AG04450 (cell line): ENCODE measurements at regions of chr17 and their contacts with region 1.

Region 1: DNA sequence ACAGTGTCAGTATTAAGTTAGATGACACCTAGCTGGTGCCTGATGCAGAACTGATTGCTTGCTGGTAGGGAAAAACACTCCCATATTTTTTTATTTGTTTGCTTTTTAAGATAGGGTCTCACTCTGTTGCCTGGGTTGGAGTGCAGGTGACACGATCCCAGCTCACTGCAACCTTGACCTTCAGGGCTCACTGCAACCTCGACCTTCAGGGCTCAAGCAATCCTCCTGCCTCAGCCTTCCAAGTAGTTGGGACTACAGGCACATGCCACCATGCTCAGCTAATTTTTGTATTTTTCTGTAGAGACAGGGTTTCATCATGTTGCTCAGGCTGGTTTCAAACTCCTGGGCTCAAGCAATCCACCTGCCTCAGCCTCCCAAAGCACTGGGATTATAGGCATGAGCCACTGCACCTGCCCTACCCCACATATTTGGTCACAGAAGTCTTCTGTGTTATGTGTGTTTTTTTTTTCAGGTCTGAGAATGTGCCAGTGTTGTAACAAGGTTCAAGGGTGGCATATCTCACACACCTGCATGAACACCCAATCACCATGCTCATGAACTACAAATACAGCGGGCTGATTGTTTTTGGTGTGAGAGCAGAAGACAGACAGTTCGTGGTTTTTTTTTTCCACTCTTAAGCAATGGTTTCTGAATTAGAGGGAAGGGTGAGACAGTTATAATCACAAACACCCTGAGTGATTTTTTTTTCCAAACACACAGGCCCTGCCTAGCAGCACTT is 22.8 kb downstream of the SPAG9 start:
- DNase-seq: no peak
- H3K4me3 ChIP-seq: no peak overlapping the region
- H3K27ac ChIP-seq: no peak overlapping the region
- H3K27me3 ChIP-seq: no peaks in the 10 kb centered on the region
- CTCF ChIP-seq: no peak

Region 2: GRCh38 chr17:49290690-49291359 is 1807.1 kb before region 1 on chr17:
- CTCF ChIA-PET with region 1: interaction called, 12 read pairs
- POLR2A ChIA-PET with region 1: no interaction called
- DNase-seq: no peak
- H3K4me3 ChIP-seq: no peak overlapping the region
- H3K27ac ChIP-seq: no peak overlapping the region
- H3K27me3 ChIP-seq: no peaks in the 10 kb centered on the region
- CTCF ChIP-seq: peak; percentile 79

Region 3: GRCh38 chr17:51085185-51085805 is 12.6 kb before region 1 on chr17:
- CTCF ChIA-PET with region 1: no interaction called
- POLR2A ChIA-PET with region 1: no interaction called
- DNase-seq: no peak
- H3K4me3 ChIP-seq: peak overlapping the region; percentile 3; the same call in 1 of the 2 replicates
- H3K27ac ChIP-seq: peak overlapping the region; percentile 34
- H3K27me3 ChIP-seq: no peaks in the 10 kb centered on the region
- CTCF ChIP-seq: no peak